AG04450 (cell line): ENCODE measurements at regions of chr19 and their contacts with region 1.

Region 1: GRCh38 chr19:55407800-55408532 is 378 bp upstream of the UBE2S start:
- DNase-seq: peak; percentile 99
- H3K4me3 ChIP-seq: peak overlapping the region; percentile 83
- H3K27ac ChIP-seq: peak overlapping the region; percentile 100
- H3K27me3 ChIP-seq: no peaks in the 10 kb centered on the region
- CTCF ChIP-seq: no peak

Region 2: DNA sequence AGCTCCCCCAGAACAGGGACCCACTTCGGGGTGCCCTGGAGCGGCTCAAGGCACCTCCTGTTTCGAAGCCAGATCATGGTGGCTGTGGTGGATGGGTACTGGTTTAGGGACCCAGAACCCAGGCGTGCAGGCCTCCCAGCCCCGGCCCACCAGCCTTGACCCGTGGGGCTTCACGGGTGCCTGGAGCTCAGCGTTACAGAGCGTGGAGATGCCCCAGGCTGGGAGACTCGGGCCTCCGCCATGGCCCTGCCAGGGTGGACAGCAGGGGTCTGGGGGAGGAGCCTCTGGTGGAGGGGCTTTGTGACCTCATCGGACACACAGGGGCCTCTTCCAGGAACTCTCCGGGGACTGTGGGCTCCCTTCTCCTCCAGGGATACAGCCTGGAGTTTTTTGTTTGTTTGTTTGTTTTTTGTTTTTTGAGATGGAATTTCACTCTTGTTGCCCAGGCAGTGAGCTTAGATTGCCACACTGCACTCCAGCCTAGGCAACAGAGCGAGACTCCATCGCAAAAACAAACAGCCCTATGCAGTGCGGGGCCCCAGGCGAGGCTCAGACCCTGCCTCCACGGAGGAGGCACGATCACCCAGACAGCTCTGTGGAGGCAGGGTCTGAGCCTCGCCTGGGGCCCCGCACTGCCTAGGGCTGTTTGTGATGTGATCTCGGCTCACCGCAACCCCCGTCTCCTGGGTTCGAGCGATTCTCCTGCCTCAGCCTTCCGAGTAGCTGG is 44.8 kb before region 1 on chr19 and contains the start of gene GARIN5B:
- CTCF ChIA-PET with region 1: no interaction called
- POLR2A ChIA-PET with region 1: interaction called, 27 read pairs
- DNase-seq: no peak
- H3K4me3 ChIP-seq: no peak within 1 kb of the TSS
- H3K27ac ChIP-seq: no peak within 1 kb of the TSS
- H3K27me3 ChIP-seq: peaks cover 1% of the 10 kb centered on the region
- CTCF ChIP-seq: no peak
- polyA plus RNA-seq, gene GARIN5B: not detected in 2 replicates

Region 3: DNA sequence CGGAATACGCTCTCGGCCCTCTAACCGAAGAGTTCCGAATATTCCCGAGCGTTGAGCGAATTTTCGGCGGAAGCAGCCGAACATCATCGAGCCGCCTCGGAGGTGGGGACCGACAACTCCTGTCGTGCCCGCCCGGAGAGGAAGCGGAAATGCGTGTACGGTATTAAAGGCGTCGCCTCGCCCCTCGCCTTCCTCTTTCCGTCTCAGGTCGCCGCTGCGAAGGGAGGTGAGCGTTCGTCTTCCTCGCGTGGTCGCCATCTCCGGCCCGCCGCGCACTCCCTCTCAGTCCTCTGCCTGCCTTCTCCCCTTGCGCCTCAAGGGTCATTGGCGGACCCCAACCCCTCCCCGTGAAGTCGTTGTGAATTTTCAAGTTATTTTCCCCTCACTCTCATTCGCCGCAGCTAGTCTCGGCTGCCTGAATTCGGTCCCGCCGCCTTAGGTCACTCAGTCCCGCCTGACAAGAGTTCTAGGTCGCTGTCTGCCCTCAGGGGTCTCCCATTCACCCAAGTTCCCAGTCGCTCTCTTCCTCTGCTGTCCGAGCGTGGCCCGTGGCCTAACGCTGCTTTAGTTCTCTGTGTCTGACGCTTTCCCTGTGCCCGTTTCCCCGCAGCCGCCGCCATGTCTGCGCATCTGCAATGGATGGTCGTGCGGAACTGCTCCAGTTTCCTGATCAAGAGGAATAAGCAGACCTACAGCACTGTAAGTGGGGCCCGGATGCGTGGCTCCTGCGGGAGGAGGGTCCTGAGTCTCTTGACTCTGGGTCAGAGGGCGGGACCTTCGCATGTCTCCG is 22.0 kb before region 1 on chr19 and contains the start of gene RPL28:
- CTCF ChIA-PET with region 1: no interaction called
- POLR2A ChIA-PET with region 1: interaction called, 93 read pairs
- DNase-seq: peak; percentile 95
- H3K4me3 ChIP-seq: peak within 1 kb of the TSS; percentile 99
- H3K27ac ChIP-seq: peak within 1 kb of the TSS; percentile 93
- H3K27me3 ChIP-seq: no peaks in the 10 kb centered on the region
- CTCF ChIP-seq: no peak
- polyA plus RNA-seq, gene RPL28: 325 and 535 TPM in 2 replicates

Region 4: GRCh38 chr19:55437410-55438075 is 29.6 kb after region 1 on chr19:
- CTCF ChIA-PET with region 1: no interaction called
- POLR2A ChIA-PET with region 1: interaction called, 10 read pairs
- DNase-seq: no peak
- H3K4me3 ChIP-seq: no peak overlapping the region
- H3K27ac ChIP-seq: no peak overlapping the region
- H3K27me3 ChIP-seq: peaks cover 33% of the 10 kb centered on the region
- CTCF ChIP-seq: no peak

Region 5: GRCh38 chr19:55476100-55476775 is 68.3 kb after region 1 on chr19 and contains the start of gene ZNF628:
- CTCF ChIA-PET with region 1: no interaction called
- POLR2A ChIA-PET with region 1: interaction called, 10 read pairs
- DNase-seq: peak; percentile 92
- H3K4me3 ChIP-seq: peak within 1 kb of the TSS; percentile 72
- H3K27ac ChIP-seq: peak within 1 kb of the TSS; percentile 57
- H3K27me3 ChIP-seq: no peaks in the 10 kb centered on the region
- CTCF ChIP-seq: no peak
- polyA plus RNA-seq, gene ZNF628: 0.12 and 0.31 TPM in 2 replicates